A549 (cell line): ENCODE measurements at regions of chr17 and their contacts with region 1.

Region 1: DNA sequence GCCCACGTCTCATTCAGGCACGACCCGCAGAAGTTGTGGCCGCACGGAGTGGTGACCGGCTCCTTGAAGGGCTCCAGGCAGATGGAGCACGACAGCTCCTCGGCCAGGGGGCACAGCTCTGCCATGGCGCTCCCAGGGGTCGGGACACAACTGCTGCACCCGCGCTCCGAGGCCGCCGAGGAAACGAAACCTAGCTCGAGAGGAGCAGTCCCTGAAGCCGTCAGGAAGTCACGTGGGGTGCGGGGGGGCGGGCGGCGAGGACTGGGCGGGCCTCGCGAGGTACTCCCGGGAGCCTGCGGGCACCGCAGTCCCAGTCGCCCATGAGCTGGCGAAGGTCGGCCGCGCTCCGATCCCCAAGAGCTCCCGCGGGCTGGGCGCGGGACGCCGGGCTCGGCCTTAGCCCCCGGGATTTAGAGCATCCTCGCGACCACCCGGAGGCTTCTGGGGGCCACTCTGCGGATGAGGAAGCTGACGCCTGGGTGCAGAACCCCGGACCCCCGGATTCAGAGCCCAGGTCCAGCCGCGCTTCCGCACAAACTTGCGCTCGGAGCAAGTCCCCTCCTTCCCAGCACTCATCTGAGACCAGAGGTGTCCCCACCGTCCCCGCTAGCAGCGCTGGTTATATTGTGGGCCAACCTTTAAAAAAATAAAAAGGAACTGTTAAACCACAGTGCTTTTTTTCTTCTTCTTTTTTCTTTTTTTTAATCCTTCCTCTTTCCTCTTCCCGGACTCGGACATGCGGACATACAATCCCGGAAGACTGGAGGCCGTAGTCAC is at the start of gene TRIM25:
- DNase-seq: peak; percentile 93 to 98
- ATAC-seq: peak; percentile 78 to 91
- H3K4me3 ChIP-seq: peak within 1 kb of the TSS; percentile 63
- H3K27ac ChIP-seq: peak within 1 kb of the TSS; percentile 93 to 94
- H3K4me1 ChIP-seq: peaks cover 42% of the 10 kb centered on the region
- CTCF ChIP-seq: no peak
- EP300 ChIP-seq: no peak
- POLR2A ChIP-seq: peak; percentile 98
- RAD21 ChIP-seq: 0 out of 5 replicates have a peak, but pooled peaks of 1 of the 2 experiments have one; percentile 22
- polyA plus RNA-seq, gene TRIM25: 56.6 and 65.4 TPM in 2 replicates

Region 2: GRCh38 chr17:56808503-56808902 is 105.5 kb before region 1 on chr17:
- CTCF ChIA-PET with region 1: no interaction called
- POLR2A ChIA-PET with region 1: no interaction called
- DNase-seq: no peak
- ATAC-seq: no peak
- H3K4me3 ChIP-seq: no peak overlapping the region
- H3K27ac ChIP-seq: no peak overlapping the region
- H3K4me1 ChIP-seq: no peaks in the 10 kb centered on the region
- CTCF ChIP-seq: no peak
- EP300 ChIP-seq: no peak
- POLR2A ChIP-seq: no peak
- RAD21 ChIP-seq: no peak

Region 3: GRCh38 chr17:56833809-56834379 is 80.2 kb before region 1 on chr17 and contains the starts of genes C17orf67 and DGKE:
- CTCF ChIA-PET with region 1: no interaction called
- POLR2A ChIA-PET with region 1: interaction called, 33 read pairs
- DNase-seq: peak; percentile 85 to 97
- ATAC-seq: peak; percentile 81 to 93
- H3K4me3 ChIP-seq: peak within 1 kb of the TSS; percentile 85
- H3K27ac ChIP-seq: peak within 1 kb of the TSS; percentile 87 to 89
- H3K4me1 ChIP-seq: peaks cover 25% of the 10 kb centered on the region
- CTCF ChIP-seq: no peak
- EP300 ChIP-seq: no peak
- POLR2A ChIP-seq: peak; percentile 87
- RAD21 ChIP-seq: no peak
- polyA plus RNA-seq, gene C17orf67: 1.8 and 2.9 TPM in 2 replicates
- polyA plus RNA-seq, gene DGKE: 4.6 and 5.8 TPM in 2 replicates

Region 4: GRCh38 chr17:56863974-56864373 is 50.1 kb before region 1 on chr17:
- CTCF ChIA-PET with region 1: no interaction called
- POLR2A ChIA-PET with region 1: no interaction called
- DNase-seq: no peak
- ATAC-seq: no peak
- H3K4me3 ChIP-seq: no peak overlapping the region
- H3K27ac ChIP-seq: no peak overlapping the region
- H3K4me1 ChIP-seq: no peaks in the 10 kb centered on the region
- CTCF ChIP-seq: no peak
- EP300 ChIP-seq: no peak
- POLR2A ChIP-seq: no peak
- RAD21 ChIP-seq: no peak

Region 5: GRCh38 chr17:56902355-56903083 is 11.5 kb before region 1 on chr17:
- CTCF ChIA-PET with region 1: interaction called, 5 read pairs
- POLR2A ChIA-PET with region 1: interaction called, 34 read pairs
- DNase-seq: peak; percentile 68 to 69
- ATAC-seq: peak; percentile 75 to 88
- H3K4me3 ChIP-seq: no peak overlapping the region
- H3K27ac ChIP-seq: peak overlapping the region; percentile 41 to 43; a peak in 4 of 6 replicates
- H3K4me1 ChIP-seq: peaks cover 21% of the 10 kb centered on the region
- CTCF ChIP-seq: no peak
- EP300 ChIP-seq: no peak
- POLR2A ChIP-seq: no peak
- RAD21 ChIP-seq: no peak

Region 6: DNA sequence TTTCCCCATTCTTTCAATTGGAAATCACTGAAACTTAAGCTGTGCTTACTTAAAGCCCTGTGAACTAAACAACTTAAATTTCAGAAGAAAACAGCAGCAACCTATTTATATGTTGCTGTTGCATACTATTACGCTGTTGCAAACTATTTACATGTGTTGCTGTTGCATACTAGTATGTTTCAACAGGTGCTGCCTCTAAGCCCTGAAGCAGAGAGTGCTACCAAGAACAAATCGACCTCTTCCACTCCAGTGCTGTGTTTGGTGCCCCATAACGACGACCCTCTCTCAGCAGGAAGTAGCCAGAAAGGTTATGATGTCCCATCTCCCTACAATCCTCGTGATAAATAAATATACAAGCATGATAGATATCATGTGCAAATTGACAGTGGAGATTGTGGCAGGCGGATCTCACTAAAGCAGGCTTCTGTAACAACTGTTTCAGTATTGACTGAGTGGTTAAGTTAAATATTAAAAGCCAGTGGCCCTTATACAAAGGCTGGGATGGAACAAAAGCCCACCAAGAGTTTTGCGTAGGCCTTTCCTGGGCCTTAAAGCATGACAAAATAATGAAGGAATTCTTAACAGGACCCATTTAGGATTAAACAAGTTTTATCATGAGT is 58.2 kb after region 1 on chr17:
- CTCF ChIA-PET with region 1: no interaction called
- POLR2A ChIA-PET with region 1: no interaction called
- DNase-seq: no peak
- ATAC-seq: no peak
- H3K4me3 ChIP-seq: no peak overlapping the region
- H3K27ac ChIP-seq: no peak overlapping the region
- H3K4me1 ChIP-seq: 0 out of 3 replicates have a peak, but pooled peaks cover 4% of the 10 kb centered on the region
- CTCF ChIP-seq: no peak
- EP300 ChIP-seq: no peak
- POLR2A ChIP-seq: no peak
- RAD21 ChIP-seq: no peak